Mucosa of descending colon (tissue), 3 donors: ENCODE measurements at regions of chr11 and their contacts with region 1.

Region 1: DNA sequence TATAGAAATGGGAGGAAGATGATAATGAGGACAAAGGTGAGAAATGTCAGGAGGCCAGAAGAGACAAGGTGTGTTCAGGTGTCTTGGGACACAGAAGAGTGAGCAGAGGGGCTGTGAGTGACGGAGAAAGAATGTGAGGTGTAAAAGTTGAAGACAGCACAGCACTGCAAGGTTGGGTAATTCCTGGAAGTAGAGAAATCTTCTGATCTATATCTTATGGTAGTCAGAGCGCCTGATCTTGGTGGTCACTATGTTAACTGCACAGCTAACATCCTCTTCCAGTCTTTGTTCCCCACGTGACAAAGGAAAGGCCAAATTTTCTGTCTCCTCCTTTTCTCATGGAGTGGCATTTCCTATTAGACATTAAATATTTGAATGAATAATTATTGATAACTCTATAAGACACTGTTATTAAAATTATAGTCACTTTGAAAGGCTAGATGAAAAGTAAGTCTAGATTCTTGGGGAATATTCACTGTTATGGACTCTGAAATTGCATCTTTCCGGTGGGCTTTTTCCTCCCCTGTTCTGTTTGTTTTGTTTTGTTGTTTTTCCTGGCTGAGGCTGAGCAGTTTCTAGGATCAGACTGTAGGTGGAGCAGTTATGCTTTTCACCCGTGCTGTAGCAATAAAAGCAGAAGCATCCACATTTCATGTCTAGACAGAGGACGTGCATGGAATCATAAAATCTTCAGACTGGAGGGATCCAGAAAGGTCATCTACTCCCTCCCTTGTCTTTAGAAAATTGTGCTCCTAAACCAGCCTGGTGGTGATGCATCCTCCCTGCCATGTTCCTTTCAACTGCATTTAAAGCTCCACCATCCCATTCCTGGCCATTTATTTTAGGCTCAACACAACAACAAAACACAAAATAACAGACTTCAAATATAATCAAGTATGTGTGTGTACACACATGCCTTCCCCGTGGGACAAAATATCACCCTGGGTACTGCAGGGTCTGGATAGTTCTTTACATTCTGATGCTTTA is 26.6 kb downstream of the SC5D start:
- DNase-seq: peak in 1 of 3 donors; percentile 61
- ATAC-seq: peak; percentile 84
- H3K4me3 ChIP-seq: no peak overlapping the region
- H3K4me1 ChIP-seq: no peaks in the 10 kb centered on the region
- CTCF ChIP-seq: peak; percentile 53

Region 2: GRCh38 chr11:121451986-121452608 is 133.0 kb after region 1 on chr11 and contains the start of gene SORL1:
- intact Hi-C with region 1: loop called in 1 of 2 experiments (anchors 5 kb)
- DNase-seq: peak; percentile 88 to 91 (median 88)
- ATAC-seq: peak; percentile 78
- H3K4me3 ChIP-seq: peak within 1 kb of the TSS; percentile 80
- H3K4me1 ChIP-seq: peaks cover 30% of the 10 kb centered on the region
- CTCF ChIP-seq: peak; percentile 43
- total RNA-seq, gene SORL1: 58.3 to 195 (median 109) TPM

Region 3: DNA sequence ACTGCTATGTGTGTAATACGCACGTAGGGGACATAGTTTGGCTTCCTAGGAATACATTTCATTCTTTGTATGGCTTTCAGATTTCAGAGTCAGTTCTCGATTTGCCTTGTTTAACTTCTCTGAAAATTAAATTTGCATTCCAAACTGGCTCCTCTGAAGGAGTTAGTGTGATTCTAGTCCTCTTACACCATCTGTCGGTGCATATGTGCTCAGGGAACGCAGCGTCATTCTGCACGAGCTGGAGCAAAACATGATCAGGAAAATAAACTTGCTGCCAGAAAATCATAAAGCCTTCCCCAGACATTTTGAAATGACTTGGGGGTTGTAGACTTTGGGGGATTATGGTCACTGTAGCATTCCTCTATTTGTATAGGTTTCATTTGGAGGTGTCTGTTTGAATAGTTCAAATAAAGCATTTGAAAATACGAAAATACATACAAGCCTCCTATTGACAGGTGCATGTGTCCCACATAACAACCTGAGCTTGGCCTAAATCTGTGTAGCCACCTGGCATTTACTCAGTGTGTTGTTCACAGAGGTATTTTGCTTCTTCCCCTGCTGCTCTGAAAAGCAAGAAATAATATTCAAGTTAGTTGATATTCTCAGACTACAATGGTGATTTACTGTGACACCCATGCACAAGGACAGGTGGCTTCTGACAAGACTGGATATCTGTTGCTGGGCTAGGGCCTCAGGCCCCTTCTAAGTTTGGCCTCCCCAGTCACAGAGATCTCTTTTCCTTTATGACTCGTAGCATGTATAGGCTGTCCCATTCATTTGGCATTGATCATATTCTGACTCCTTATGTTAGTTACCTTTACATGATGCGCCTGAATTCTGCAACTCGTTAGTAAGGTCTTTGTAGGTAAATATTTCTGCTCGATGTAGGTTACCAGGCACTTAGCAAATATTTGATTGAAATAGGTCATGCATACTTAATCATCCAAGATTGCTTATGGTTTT is 215.3 kb after region 1 on chr11:
- intact Hi-C with region 1: loop called in 1 of 2 experiments (anchors 10 kb)
- DNase-seq: no peak
- ATAC-seq: no peak
- H3K4me3 ChIP-seq: no peak overlapping the region
- H3K4me1 ChIP-seq: no peaks in the 10 kb centered on the region
- CTCF ChIP-seq: no peak

Region 4: DNA sequence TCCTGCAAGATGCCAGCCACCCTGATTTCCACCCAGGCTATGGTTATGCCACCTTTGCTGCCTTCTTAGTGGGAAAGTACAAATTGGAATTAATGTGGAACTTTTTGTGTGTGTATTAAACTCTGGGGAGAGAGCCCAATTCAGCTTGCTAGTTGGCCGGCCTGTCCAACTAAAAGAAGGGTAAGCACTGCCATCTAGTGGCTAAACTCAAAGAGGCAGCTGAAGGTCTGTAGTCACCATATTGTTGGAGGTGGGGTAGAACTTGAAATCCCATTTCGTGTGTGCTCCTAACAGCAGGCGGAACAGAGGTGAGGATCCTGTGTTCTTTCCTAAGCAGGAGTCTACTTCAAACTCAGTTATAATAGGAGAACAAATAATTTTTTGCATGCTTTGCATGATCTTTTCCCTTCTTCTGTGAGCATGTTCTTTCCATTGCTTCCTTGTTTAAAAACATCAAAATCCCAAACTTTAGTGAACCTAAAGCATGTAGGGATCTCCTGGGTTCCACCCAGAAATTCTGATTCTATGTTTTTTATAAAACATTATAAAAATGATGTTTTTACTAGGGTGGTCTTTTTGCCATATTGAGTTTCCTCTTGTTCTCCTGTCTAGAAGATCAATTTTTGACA is 272.4 kb after region 1 on chr11:
- intact Hi-C with region 1: loop called (anchors 2 to 5 kb)
- DNase-seq: peak in 1 of 3 donors; percentile 91
- ATAC-seq: peak; percentile 64
- H3K4me3 ChIP-seq: no peak overlapping the region
- H3K4me1 ChIP-seq: peaks cover 6% of the 10 kb centered on the region
- CTCF ChIP-seq: peak; percentile 42